ENCODE measurements at regions of chr17 and their contacts with region 1.

Region 1: DNA sequence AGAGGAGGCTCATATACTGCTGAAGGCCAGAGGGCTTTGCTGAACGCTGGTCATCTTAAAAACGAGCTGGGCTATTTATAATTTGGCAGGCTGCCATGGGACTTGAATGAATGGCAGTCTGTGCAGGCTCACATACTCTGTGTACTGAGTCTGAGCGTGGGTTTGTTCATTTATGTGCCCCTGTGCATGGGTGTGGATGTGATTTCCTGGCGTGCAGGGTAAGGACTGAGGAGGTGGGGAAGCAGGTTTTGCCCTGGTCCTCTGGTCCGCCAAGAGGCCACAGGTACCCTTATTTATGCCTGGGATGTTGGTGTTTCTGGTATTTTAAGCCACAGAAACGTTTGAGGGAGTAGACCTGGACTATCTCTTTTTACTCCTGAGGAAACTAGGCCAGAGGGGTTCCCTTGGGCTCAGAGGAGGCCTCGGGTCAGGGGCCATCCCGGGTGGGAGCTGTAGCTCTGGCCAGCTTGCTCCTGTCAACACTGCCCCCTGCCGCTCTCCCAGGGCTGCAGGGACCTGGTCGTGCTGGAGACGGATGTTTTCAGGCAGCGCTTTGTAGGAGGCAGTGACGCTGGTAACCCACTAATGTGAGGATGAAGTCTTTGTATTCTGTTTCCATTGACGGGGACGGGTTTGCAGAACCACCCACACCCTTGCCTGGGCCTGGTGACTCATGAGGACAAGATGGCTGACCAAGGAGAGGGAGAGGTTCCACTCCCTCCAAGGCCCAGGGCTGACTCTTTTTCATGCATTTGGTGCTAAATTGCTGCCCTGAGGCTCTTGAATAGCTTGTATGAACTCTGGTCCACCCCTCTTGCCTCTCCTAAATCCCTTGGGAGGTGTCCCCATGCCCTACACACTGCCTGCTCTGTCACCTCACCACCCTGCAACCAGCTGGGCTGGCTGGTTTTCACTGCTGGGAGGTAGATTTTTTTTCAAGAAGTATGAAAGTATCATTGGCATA is 184.5 kb downstream of the MSI2 start:
- DNase-seq: peak; percentile 66
- H3K4me3 Mint-ChIP-seq: peak overlapping the region; percentile 72
- H3K27ac Mint-ChIP-seq: peak overlapping the region; percentile 98
- H3K4me1 Mint-ChIP-seq: peaks cover 93% of the 10 kb centered on the region
- H3K27me3 Mint-ChIP-seq: peaks cover 2% of the 10 kb centered on the region

Region 2: GRCh38 chr17:57243171-57243948 is 197.4 kb before region 1 on chr17:
- intact Hi-C with region 1: loop called (anchors 1 kb)
- DNase-seq: peak; percentile 66
- H3K4me3 Mint-ChIP-seq: no peak overlapping the region
- H3K27ac Mint-ChIP-seq: peak overlapping the region; percentile 30
- H3K4me1 Mint-ChIP-seq: peaks cover 12% of the 10 kb centered on the region
- H3K27me3 Mint-ChIP-seq: peaks cover 23% of the 10 kb centered on the region

Region 3: DNA sequence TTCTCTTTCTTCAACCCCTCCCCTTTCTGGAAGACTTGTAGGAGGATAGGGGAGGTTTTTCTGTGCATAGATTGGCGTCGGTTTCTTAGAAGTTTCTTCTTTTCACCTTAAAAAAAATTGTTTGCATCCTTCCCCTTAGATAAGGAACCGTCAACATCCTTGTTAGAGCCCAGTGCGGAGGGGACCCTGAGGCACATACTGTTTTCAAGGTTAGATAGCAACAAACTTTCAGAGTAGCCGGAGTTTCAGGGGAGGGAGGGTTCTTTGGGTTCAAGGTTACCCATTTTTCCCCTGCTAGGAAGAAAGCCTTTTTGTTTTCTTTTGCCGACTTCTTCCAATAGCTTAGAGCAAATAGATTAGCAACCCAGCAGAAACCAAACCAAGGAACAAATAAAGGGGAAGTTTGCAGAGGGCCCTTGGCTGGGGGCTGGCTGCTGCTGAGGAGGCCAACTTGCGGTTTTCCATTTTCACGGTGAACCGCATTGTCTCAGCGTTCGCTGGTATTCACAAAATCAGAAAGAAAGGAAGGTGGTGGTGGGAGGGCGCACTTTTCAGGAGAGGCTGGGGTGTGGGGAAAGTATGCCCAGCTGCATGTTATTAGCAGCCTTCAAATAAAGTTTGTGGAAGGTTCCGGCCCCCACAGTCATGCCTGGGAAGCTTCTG is 155.7 kb before region 1 on chr17:
- intact Hi-C with region 1: loop called (anchors 1 kb)
- DNase-seq: peak; percentile 64
- H3K4me3 Mint-ChIP-seq: peak overlapping the region; percentile 59
- H3K27ac Mint-ChIP-seq: peak overlapping the region; percentile 94
- H3K4me1 Mint-ChIP-seq: peaks cover 94% of the 10 kb centered on the region
- H3K27me3 Mint-ChIP-seq: no peaks in the 10 kb centered on the region

Region 4: DNA sequence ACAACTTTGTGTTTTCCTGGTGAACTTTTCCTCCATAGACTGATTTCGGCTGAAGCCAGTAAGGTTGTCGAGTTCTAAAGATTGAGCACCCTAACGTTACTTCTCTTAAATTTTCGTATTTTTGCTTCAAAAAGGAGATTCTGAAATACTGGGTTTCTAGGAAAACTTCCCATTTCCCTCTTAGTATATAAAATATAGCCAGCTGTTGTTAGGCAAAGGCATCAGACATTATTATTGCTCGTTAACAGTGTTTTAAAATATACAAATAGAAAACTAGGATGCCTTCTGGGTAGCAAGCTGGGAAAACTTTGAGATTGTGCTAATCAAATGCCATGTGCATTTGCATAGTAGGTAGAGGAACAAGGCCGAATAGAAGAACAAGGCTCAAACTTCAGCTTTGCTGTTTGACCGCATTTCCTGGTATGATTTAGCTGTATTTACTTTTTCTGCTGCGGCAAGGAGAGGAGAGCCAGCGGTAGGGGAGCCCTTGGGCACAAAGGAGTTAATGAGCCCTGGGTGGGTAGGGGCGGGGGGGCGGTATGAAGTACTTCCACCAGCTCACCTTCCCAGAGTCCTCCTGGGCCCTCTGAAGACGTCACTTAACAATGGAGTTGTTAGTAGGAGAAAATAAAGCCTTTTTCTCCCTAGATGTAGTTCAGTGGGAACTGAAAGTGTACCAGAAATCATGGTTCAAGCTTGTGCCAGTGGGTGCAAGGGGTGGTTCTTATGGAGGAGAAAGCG is 32.6 kb before region 1 on chr17:
- intact Hi-C with region 1: no loop called
- DNase-seq: peak; percentile 6
- H3K4me3 Mint-ChIP-seq: peak overlapping the region; percentile 25
- H3K27ac Mint-ChIP-seq: peak overlapping the region; percentile 51
- H3K4me1 Mint-ChIP-seq: peaks cover 46% of the 10 kb centered on the region
- H3K27me3 Mint-ChIP-seq: no peaks in the 10 kb centered on the region

Region 5: GRCh38 chr17:57463103-57463851 is 22.5 kb after region 1 on chr17:
- intact Hi-C with region 1: loop called (anchors 1 kb)
- DNase-seq: peak; percentile 82
- H3K4me3 Mint-ChIP-seq: peak overlapping the region; percentile 70
- H3K27ac Mint-ChIP-seq: peak overlapping the region; percentile 90
- H3K4me1 Mint-ChIP-seq: peaks cover 72% of the 10 kb centered on the region
- H3K27me3 Mint-ChIP-seq: no peaks in the 10 kb centered on the region

Region 6: DNA sequence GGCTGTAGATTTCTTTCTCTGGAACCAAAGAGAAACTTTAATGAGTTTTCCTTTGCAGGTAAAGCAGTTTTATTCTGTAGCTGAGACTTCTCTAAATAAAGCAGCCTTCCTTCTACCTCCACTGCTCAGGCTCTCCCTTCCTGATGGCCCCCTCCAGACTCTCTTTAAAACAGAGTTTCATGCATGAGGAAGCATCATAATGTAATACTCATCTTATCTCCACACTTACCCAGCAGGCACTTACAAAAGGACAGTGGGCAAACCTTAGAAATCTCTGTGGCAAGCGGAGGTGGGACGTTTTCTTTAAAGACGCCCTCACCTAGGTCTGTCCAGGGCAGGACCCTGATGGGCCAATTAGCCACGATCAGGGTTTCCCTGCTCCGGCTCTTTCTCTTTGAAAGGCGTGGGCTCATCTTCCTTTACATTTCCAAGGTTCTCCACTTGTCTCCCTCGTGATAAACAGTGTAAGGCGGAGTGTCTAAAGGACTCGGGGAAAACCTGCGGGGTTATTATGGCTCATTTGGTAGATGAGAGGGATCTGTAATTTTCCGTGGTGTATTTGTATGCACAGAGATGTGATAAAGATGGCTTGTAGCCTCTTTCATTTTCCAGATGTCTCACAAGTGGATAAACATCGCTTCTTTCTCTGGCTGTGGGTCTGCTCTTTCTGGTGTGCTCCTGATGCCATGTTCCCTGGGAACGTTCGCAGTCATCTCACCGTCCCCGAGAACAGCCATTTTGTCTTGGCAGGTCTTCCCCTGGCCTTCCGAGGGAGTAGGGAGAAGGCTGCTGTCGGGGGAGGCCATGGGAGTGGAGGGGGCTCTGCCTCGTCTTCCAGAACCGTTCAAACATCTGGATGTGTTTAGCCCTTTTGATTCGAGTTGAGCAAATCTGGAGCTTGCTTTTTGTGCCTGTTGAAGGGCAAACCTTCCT is 65.3 kb after region 1 on chr17:
- intact Hi-C with region 1: loop called (anchors 5 kb)
- DNase-seq: no peak
- H3K4me3 Mint-ChIP-seq: no peak overlapping the region
- H3K27ac Mint-ChIP-seq: no peak overlapping the region
- H3K4me1 Mint-ChIP-seq: peaks cover 12% of the 10 kb centered on the region
- H3K27me3 Mint-ChIP-seq: no peaks in the 10 kb centered on the region

Region 7: DNA sequence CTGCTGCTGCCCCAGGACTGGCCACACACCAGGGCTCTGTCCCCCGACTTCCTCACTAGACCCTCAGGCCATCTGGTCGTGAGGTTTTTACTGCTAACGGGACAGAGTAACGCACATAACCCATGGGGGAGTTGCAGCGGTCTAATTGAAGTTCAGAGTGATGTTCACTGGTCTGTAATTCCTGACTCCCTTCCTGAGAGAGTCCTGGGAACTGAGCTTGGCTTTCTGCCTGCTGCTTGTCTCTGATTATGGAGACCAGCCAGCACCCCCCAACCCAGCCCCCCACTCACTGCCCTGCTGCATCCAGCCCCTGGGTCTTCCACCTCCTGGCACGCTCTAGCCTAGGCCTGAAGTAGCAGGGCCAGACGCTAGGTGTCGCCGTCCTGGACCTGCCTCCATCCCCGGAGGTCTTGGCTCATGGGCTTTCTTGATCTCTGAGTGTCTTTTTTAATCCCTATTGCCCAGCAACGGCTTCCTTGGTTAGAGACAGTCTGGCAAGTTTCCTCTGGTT is 111.4 kb after region 1 on chr17:
- intact Hi-C with region 1: no loop called
- DNase-seq: no peak
- H3K4me3 Mint-ChIP-seq: no peak overlapping the region
- H3K27ac Mint-ChIP-seq: no peak overlapping the region
- H3K4me1 Mint-ChIP-seq: peaks cover 5% of the 10 kb centered on the region
- H3K27me3 Mint-ChIP-seq: no peaks in the 10 kb centered on the region

Region 8: DNA sequence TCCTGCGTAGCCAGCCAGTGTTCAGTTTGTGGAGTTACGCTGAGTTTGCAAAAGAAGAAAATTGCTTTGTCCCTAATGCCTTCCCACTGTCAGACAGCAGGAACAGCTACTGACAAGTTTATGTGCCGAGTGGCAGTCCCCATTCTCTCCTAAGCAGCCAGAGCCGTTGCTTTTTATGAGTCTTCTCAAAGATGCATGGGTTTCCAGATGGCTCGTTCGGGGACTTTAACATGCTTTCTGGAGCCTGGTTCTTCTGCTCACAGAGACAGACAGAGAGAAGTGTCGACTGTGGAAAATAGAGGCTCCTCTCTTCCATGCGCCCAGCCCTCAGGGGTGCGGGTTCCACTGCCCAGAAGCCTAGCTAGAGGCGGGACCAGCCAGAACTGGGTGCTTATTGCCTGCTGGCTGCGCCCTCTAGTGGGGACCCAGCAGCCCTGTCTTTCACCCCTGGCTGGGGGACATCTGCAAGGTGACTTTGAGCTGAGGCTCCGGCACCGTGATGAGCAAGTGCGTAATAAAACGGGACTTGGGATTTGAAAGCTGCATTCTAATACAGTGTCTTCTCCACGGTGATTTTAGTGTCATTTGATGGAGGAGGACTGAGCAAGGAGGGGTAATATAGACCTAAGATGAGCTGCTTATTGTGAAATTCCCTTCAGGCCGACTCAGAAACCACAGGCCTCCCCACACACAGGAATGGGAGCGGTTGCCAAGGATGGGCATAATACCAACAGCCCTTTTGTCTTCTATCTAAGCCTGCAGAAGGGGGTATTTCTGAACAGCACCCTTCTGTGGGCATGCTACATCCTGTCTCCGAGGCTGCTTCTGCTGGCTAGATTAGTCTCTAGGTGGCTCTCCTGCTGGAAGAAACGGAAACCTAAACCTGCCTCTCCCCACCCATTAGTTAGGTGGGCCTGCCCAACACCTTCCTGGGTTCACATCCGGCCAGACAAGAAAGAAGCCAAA is 231.1 kb after region 1 on chr17:
- intact Hi-C with region 1: loop called (anchors 10 kb)
- DNase-seq: peak; percentile 55
- H3K4me3 Mint-ChIP-seq: no peak overlapping the region
- H3K27ac Mint-ChIP-seq: no peak overlapping the region
- H3K4me1 Mint-ChIP-seq: peaks cover 27% of the 10 kb centered on the region
- H3K27me3 Mint-ChIP-seq: no peaks in the 10 kb centered on the region